ENCODE measurements at regions of chr2 and their contacts with region 1.

Region 1: GRCh38 chr2:18149645-18150246 is 271.3 kb downstream of the KCNS3 start:
- DNase-seq: peak; percentile 81
- ATAC-seq: peak; percentile 37; the same call in 1 of the 2 replicates
- H3K4me3 ChIP-seq: no peak overlapping the region
- H3K27ac ChIP-seq: no peak overlapping the region
- H3K4me1 ChIP-seq: peaks cover 10% of the 10 kb centered on the region
- H3K27me3 ChIP-seq: no peaks in the 10 kb centered on the region; the same call in 1 of the 2 replicates
- CTCF ChIP-seq: peak; percentile 83

Region 2: GRCh38 chr2:17851731-17852585 is 297.8 kb before region 1 on chr2:
- CTCF ChIA-PET with region 1: no interaction called
- POLR2A ChIA-PET with region 1: no interaction called
- intact Hi-C with region 1: loop called (anchors 5 kb)
- DNase-seq: peak; percentile 79
- ATAC-seq: peak; percentile 88
- H3K4me3 ChIP-seq: no peak overlapping the region
- H3K27ac ChIP-seq: no peak overlapping the region
- H3K4me1 ChIP-seq: no peaks in the 10 kb centered on the region
- H3K27me3 ChIP-seq: peaks cover 3% of the 10 kb centered on the region; the same call in 1 of the 2 replicates
- CTCF ChIP-seq: peak; percentile 92